Natural killer cell (primary cell): ENCODE measurements at regions of chr10 and their contacts with region 1.

Region 1: GRCh38 chr10:68348265-68348741 is 15.6 kb upstream of the PBLD start:
- DNase-seq: peak; percentile 17 to 78
- ATAC-seq: peak; percentile 62 to 88 (median 71)
- H3K4me3 ChIP-seq: no peak overlapping the region
- H3K4me3 Mint-ChIP-seq: no peak overlapping the region
- H3K27ac ChIP-seq: no peak overlapping the region
- H3K27ac Mint-ChIP-seq: peak overlapping the region; percentile 60 to 75
- H3K4me1 ChIP-seq: no peaks in the 10 kb centered on the region
- H3K4me1 Mint-ChIP-seq: peaks cover 0 to 6% of the 10 kb centered on the region in 2 donors
- H3K27me3 ChIP-seq: no peaks in the 10 kb centered on the region
- H3K27me3 Mint-ChIP-seq: no peaks in the 10 kb centered on the region
- CTCF ChIP-seq: peak; percentile 73

Region 2: DNA sequence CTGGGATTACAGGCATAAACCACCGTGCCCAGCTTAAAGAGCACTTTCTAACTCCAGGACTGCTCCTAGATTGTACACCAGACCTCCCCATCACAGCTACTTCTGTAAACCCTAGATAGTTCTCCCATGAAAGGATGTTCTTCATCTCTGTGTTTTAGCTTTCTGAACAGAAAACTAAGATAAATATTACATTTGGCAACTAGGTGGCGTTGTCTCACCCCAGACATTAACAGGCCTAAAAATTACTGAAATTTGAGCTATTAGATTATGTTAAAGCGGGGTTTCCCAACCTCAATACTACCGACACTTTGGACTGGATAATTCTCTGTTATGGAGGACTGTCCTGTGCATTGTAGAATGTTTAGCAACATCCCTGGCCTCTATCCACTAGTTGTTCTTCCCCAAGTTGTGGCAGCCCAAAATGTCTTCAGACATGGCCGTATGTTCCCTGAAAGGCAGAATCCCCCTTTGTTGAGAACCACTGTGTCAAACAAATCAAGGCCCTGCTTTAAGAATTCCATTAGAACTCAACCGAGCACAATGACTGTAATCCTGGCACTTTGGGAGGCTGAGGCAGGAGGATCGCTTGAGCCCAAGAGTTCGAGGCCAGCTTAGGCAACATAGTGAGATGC is 135.5 kb before region 1 on chr10:
- intact Hi-C with region 1: loop called (anchors 1 kb)
- DNase-seq: peak in 1 of 2 donors; percentile 55
- ATAC-seq: peak in 2 of 3 donors; percentile 18 to 25
- H3K4me3 ChIP-seq: no peak overlapping the region
- H3K4me3 Mint-ChIP-seq: no peak overlapping the region
- H3K27ac ChIP-seq: no peak overlapping the region
- H3K27ac Mint-ChIP-seq: no peak overlapping the region
- H3K4me1 ChIP-seq: no peaks in the 10 kb centered on the region
- H3K4me1 Mint-ChIP-seq: no peaks in the 10 kb centered on the region
- H3K27me3 ChIP-seq: no peaks in the 10 kb centered on the region
- H3K27me3 Mint-ChIP-seq: no peaks in the 10 kb centered on the region
- CTCF ChIP-seq: peak; percentile 48